K562 (cell line): ENCODE measurements at regions of chr6 and their contacts with region 1.

Region 1: DNA sequence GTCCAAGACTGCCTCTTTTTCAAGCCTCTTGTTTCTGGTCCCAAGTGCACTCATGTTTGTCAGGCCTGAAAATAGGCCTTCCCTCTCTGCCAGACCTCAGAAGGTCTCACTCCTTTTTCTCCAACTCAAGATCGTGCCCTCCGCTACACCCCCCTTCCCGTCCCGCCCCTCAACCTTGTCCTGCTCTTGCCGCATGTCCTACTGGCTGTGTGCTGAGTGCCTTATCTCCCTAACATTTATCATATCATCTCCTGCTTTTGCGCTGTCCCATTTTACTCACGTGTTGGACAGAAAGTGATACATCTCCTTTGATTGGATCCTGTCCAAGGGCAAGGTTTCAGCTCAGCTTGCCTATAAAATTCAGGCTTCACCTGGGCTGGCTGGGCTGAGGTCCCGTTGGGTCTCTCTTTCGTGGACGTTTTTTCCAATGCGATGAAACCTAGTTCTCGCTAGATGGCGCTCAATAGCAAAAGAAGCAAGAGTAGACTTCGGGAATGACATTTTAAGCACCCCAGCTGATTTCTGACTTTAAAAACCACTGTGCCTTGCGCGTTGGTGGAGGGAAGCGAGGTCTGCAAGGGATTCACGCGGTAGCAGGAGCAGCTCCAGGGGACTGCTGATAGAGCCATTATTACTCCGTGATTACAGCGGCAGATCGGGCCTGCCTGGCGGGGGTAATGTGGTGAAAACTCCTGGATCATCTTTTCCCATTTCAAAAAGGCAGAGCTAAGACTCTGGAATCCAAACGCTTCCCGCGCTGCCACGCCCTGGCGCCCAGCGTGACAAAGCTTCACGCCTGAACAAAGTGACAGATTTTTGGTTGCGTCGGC is 137.6 kb downstream of the IMPG1 start:
- DNase-seq: peak; percentile 38 to 67 (median 56)
- ATAC-seq: peak; percentile 90
- H3K4me3 ChIP-seq: no peak overlapping the region
- H3K27ac ChIP-seq: no peak overlapping the region
- H3K4me1 ChIP-seq: peaks cover 0 to 6% of the 10 kb centered on the region in 2 experiments; a peak in 2 of 5 replicates
- H3K27me3 ChIP-seq: no peaks in the 10 kb centered on the region
- CTCF ChIP-seq: peak; percentile 51 to 76 (median 74)
- EP300 ChIP-seq: no peak
- POLR2A ChIP-seq: no peak
- RAD21 ChIP-seq: peak; percentile 61 to 74

Region 2: DNA sequence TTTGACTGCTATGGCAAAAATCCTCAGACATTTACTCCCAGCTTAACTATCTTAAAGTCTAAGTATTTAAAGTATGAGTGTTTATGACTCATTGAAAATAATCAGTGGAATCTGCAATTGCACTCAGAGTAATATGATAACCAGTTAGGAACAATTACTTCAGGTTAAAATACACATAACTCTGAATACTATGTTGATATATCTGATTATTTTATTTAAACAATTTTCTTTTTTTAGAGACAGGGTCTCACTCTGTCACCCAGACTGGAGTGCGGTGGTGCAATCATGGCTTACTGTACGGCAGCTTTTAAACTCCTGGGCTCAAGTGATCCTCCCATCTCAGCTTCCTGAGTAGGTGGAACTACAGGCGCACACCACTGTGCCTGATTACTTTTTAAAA is 485.1 kb before region 1 on chr6:
- CTCF ChIA-PET with region 1: no interaction called
- POLR2A ChIA-PET with region 1: no interaction called
- in situ Hi-C with region 1: no loop called
- intact Hi-C with region 1: no loop called
- DNase-seq: no peak
- ATAC-seq: no peak
- H3K4me3 ChIP-seq: no peak overlapping the region
- H3K27ac ChIP-seq: no peak overlapping the region
- H3K4me1 ChIP-seq: no peaks in the 10 kb centered on the region
- H3K27me3 ChIP-seq: no peaks in the 10 kb centered on the region
- CTCF ChIP-seq: no peak
- EP300 ChIP-seq: no peak
- POLR2A ChIP-seq: no peak
- RAD21 ChIP-seq: no peak

Region 3: DNA sequence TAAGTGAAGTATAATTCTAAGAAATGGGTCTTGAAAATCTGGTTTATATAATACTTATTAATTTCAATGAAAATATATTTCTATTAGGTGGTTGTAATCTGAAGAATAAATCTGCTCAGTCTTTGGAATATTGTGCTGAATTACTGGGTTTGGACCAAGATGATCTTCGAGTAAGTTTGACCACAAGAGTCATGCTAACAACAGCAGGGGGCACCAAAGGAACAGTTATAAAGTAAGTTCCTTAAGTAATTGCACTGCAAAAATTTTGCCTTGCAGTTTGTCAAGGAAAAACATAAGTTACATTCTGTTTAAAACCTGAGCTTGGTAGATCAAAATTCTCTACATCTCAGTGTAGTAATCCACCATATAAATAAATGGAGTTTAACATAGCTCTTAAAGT is 79.8 kb before region 1 on chr6:
- CTCF ChIA-PET with region 1: no interaction called
- POLR2A ChIA-PET with region 1: no interaction called
- in situ Hi-C with region 1: no loop called
- intact Hi-C with region 1: loop called (anchors 10 kb)
- DNase-seq: peak; percentile 21 to 75 (median 28)
- ATAC-seq: peak; percentile 78
- H3K4me3 ChIP-seq: no peak overlapping the region
- H3K27ac ChIP-seq: no peak overlapping the region
- H3K4me1 ChIP-seq: no peaks in the 10 kb centered on the region
- H3K27me3 ChIP-seq: no peaks in the 10 kb centered on the region; a peak in 1 of 5 replicates
- CTCF ChIP-seq: peak; percentile 25 to 64 (median 59); a peak in 4 of 6 replicates
- EP300 ChIP-seq: no peak
- POLR2A ChIP-seq: no peak
- RAD21 ChIP-seq: peak in 1 of 2 experiments; percentile 59; a peak in 3 of 4 replicates

Region 4: GRCh38 chr6:75893058-75893775 is 41.6 kb before region 1 on chr6:
- CTCF ChIA-PET with region 1: no interaction called
- POLR2A ChIA-PET with region 1: no interaction called
- in situ Hi-C with region 1: no loop called
- intact Hi-C with region 1: loop called (anchors 2 kb)
- DNase-seq: peak; percentile 24 to 70 (median 28)
- ATAC-seq: peak; percentile 91
- H3K4me3 ChIP-seq: no peak overlapping the region
- H3K27ac ChIP-seq: no peak overlapping the region
- H3K4me1 ChIP-seq: peaks cover 0 to 2% of the 10 kb centered on the region in 2 experiments; a peak in 1 of 5 replicates
- H3K27me3 ChIP-seq: no peaks in the 10 kb centered on the region
- CTCF ChIP-seq: peak; percentile 36 to 72 (median 54); a peak in 5 of 6 replicates
- EP300 ChIP-seq: no peak
- POLR2A ChIP-seq: no peak
- RAD21 ChIP-seq: peak; percentile 74 to 79

Region 5: DNA sequence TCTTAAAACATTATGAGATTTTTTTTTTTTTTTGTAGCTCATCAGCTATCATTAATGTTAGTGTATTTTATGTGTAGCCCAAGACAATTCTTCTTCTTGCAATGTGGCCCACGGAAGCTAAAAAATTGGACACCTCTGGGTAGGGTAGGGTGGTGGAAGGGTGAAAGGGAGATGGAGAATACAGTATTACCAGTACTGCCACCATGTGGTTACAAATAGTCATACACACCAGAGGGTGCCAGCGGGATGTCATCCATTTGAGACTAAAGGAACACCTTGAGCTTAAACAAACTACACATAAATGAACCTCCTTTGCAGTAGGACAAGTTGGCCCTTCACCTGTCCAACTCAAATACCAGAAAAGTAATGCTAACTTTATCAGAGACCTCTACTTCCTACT is 926.5 kb after region 1 on chr6:
- CTCF ChIA-PET with region 1: no interaction called
- POLR2A ChIA-PET with region 1: no interaction called
- in situ Hi-C with region 1: no loop called
- intact Hi-C with region 1: loop called (anchors 10 kb)
- DNase-seq: peak in 1 of 4 experiments; percentile 4
- ATAC-seq: no peak
- H3K4me3 ChIP-seq: no peak overlapping the region
- H3K27ac ChIP-seq: no peak overlapping the region
- H3K4me1 ChIP-seq: no peaks in the 10 kb centered on the region
- H3K27me3 ChIP-seq: no peaks in the 10 kb centered on the region
- CTCF ChIP-seq: no peak; a peak in 1 of 6 replicates
- EP300 ChIP-seq: no peak
- POLR2A ChIP-seq: no peak
- RAD21 ChIP-seq: no peak

Region 6: GRCh38 chr6:77457720-77458349 is 1523.0 kb after region 1 on chr6:
- CTCF ChIA-PET with region 1: interaction called, 3 read pairs
- POLR2A ChIA-PET with region 1: no interaction called
- in situ Hi-C with region 1: loop called (anchors 25 kb)
- intact Hi-C with region 1: loop called (anchors 2 kb)
- DNase-seq: peak; percentile 24 to 48 (median 28)
- ATAC-seq: peak; percentile 42; the same call in 1 of the 3 replicates
- H3K4me3 ChIP-seq: no peak overlapping the region
- H3K27ac ChIP-seq: no peak overlapping the region
- H3K4me1 ChIP-seq: no peaks in the 10 kb centered on the region
- H3K27me3 ChIP-seq: no peaks in the 10 kb centered on the region
- CTCF ChIP-seq: peak in 2 of 3 experiments; percentile 43 to 51; a peak in 3 of 6 replicates
- EP300 ChIP-seq: no peak
- POLR2A ChIP-seq: no peak
- RAD21 ChIP-seq: peak; percentile 44 to 46; a peak in 3 of 4 replicates